ENCODE measurements at regions of chr22 and their contacts with region 1.

Region 1: DNA sequence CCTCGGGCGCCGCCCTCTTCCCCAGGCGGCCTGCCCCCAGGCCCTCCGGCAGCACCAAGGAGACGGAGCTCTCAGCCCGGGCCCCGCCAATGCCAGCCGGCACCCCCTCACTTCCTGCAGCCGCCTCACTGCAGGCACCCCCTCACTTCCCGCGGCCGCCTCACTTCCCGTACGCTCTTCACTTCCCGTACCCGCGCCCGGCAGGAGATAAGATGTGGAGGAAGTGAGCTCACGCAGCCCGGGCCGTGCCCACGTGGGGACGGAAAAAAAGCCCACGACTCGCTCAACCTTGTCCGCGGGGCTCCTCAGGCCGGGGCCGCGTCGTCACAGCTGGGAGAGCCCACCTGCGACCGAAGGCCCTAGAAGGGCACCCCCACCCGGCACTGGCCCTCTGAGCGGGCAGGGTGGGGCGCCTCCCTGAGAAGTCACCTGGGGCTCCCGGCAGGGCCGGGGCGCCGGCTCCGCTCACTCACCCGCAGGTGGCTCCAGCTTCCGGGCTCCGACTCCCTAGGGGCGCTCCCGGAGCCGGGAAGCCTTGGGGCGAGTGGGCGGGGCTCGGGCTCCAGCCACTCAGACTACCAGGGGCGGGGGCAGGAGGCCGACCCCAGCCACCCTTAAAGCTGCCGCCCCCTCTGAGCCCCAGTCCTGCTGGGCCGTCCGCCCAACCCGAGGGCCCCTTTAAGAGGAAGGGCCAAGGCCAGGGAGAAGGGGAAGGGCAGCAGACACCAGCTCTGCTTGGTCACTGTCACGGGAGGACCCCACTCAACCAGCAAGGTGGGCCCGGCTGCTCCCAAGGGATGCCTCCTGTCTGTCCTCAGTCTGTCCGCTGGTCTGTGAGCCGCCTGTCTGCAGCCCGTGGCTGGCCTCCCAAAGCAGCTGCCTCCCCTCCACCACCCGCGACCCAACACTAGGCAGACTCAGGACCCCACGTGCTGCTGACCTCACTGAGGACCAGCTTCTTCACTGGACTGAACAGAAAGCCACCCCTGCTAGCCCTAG is 31.4 kb downstream of the PISD start:
- DNase-seq: peak; percentile 96
- H3K4me3 ChIP-seq: peak overlapping the region; percentile 73
- H3K27ac ChIP-seq: peak overlapping the region; percentile 93
- H3K4me1 ChIP-seq: peaks cover 82% of the 10 kb centered on the region
- CTCF ChIP-seq: no peak

Region 2: GRCh38 chr22:31290494-31291471 is 339.8 kb before region 1 on chr22:
- CTCF ChIA-PET with region 1: interaction called, 4 read pairs
- POLR2A ChIA-PET with region 1: interaction called, 4 read pairs
- intact Hi-C with region 1: loop called (anchors 5 kb)
- DNase-seq: peak; percentile 94
- H3K4me3 ChIP-seq: peak overlapping the region; percentile 72
- H3K27ac ChIP-seq: peak overlapping the region; percentile 88
- H3K4me1 ChIP-seq: peaks cover 67% of the 10 kb centered on the region
- CTCF ChIP-seq: no peak

Region 3: GRCh38 chr22:31451709-31452571 is 178.7 kb before region 1 on chr22:
- CTCF ChIA-PET with region 1: no interaction called
- POLR2A ChIA-PET with region 1: interaction called, 3 read pairs
- intact Hi-C with region 1: loop called (anchors 5 kb)
- DNase-seq: peak; percentile 67
- H3K4me3 ChIP-seq: no peak overlapping the region
- H3K27ac ChIP-seq: peak overlapping the region; percentile 5
- H3K4me1 ChIP-seq: peaks cover 15% of the 10 kb centered on the region
- CTCF ChIP-seq: peak; percentile 90

Region 4: GRCh38 chr22:31496007-31496734 is 134.5 kb before region 1 on chr22 and contains the start of gene SFI1:
- CTCF ChIA-PET with region 1: interaction called, 3 read pairs
- POLR2A ChIA-PET with region 1: interaction called, 5 read pairs
- intact Hi-C with region 1: loop called (anchors 1 kb)
- DNase-seq: peak; percentile 95
- H3K4me3 ChIP-seq: peak within 1 kb of the TSS; percentile 89
- H3K27ac ChIP-seq: peak within 1 kb of the TSS; percentile 93
- H3K4me1 ChIP-seq: peaks cover 42% of the 10 kb centered on the region
- CTCF ChIP-seq: peak; percentile 64
- total RNA-seq, gene SFI1: 72.6 and 73.3 TPM in 2 replicates

Region 5: DNA sequence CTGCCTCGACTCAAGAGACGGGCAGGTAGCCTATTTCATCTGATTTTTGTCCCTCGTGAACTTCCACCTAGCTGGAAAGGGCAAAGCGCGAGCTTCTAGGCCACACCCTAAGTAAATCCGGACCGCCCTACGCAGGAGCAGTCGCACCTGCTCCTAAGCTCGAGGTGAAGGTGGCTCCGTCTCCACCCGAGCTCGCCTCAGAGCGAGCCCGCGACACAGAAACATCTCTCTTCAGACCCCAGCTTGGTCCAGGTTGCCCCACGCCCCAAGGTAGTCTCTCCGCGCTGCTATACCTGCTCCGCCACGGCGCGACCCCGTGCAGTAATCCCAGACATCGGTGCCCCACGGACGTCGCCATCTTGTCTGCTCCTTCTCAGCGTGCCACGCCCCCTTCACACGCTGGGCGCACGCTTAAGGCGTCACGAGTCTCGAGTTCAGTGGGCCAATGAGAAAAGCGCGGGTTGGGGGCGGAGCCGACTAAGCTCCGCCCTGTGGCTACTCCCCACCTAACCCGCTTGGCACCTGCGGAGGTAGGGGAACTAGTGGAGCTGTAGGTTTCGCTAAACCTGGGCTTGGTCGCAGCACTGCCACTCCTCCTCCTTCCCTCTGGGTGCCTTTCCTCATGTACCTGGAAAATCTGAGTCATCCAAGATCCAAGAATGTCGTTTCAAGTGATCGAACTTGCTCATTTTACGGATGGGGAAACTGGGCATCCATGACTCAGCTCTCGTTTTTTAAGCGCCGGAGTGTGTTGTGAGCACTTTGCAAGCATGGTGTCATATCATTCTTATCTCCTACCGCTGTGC is 31.4 kb after region 1 on chr22 and contains the start of gene PISD:
- CTCF ChIA-PET with region 1: interaction called, 3 read pairs
- POLR2A ChIA-PET with region 1: no interaction called
- intact Hi-C with region 1: loop called (anchors 1 kb)
- DNase-seq: peak; percentile 98
- H3K4me3 ChIP-seq: peak within 1 kb of the TSS; percentile 95
- H3K27ac ChIP-seq: peak within 1 kb of the TSS; percentile 8
- H3K4me1 ChIP-seq: peaks cover 18% of the 10 kb centered on the region
- CTCF ChIP-seq: no peak
- total RNA-seq, gene PISD: 21.5 and 25.7 TPM in 2 replicates

Region 6: GRCh38 chr22:32364210-32364609 is 733.6 kb after region 1 on chr22:
- CTCF ChIA-PET with region 1: no interaction called
- POLR2A ChIA-PET with region 1: no interaction called
- intact Hi-C with region 1: no loop called
- DNase-seq: no peak
- H3K4me3 ChIP-seq: no peak overlapping the region
- H3K27ac ChIP-seq: no peak overlapping the region
- H3K4me1 ChIP-seq: no peaks in the 10 kb centered on the region
- CTCF ChIP-seq: no peak

Measured in OCI-LY7 (cell line).